ENCODE measurements at regions of chr11 and their contacts with region 1.

Region 1: GRCh38 chr11:64185816-64186498 is at the start of gene STIP1:
- DNase-seq: peak in 7 of 10 donors; percentile 97 to 100 (median 99)

Region 2: DNA sequence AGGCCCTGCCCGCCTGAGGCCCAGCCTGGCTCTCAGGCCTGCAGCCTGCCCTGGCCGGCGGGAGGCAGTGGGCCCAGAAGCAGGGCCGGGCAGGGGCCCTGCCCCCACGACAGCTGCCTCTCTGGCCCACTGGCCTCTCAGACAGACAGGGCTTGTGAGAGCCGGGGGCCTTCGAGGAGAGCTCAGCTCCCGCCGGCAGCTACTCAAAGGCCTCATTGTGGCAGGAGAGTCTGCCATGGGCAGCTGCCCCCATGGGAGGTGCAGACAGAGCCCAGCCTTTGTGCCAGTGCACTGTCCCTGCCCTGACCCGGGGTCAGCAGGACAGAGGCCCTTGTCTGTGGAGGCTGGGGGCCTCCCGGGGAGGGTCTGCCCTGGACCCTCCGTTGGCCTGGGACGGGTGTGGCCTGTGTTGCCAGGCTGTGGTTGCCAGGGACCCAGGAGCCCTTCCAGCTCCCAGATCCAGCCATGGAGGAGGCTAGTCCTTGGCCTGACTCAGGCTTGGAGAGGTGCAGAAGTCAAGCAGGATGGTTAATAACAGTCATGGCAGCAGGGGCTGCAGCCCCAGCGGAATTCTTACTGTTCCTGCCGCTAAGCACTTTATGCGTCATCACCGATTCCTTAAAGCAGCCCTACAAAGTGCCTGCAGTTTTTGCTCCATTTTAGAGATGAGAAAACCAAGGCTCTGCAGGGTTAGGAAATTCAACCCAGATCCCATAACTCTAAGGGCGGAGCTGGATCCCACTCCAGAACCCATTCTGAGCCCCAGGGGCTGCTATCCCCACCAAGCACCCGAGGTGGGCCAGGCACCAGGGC is 137.7 kb before region 1 on chr11:
- intact Hi-C with region 1: no loop called
- DNase-seq: peak; percentile 86 to 100 (median 94)

Region 3: DNA sequence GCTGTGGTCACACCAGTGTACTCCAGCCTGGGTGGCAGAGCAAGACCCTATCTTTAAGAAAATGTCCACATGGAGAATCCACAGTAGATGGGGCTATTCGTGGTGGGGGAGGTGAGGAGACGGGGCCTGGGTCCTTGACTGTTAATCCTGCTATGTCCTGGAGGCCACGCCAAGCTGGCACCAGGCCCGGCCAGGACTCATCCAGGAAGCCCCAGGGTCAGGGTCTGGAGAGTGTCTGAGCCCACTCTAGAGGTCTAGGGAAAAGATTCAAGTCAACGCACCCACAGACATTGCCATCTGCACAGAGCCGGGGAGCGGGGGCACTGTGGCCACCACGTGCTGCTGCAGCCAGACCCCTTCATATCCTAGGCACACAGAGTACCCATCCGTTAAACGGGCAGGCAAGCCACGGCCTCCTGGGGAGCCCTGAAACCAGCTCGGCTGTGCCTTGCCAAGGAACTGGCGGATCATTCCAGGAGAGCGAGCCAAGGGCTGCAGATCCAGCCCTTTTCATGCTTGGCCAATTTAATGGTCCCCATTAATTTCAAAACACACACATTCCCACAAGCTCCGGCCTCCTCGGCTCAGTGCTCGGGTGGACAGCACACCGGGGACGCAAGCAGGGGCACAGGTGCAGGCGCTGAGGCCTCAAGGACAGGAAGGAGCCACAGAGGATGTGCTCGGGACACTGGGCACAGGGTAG is 44.7 kb before region 1 on chr11:
- intact Hi-C with region 1: no loop called
- DNase-seq: peak in 4 of 10 donors; percentile 39 to 90 (median 50)

Region 4: GRCh38 chr11:64230171-64230984 is 44.4 kb after region 1 on chr11 and contains the start of gene DNAJC4:
- intact Hi-C with region 1: loop called (anchors 10 kb)
- DNase-seq: peak; percentile 83 to 99 (median 92)

Region 5: GRCh38 chr11:64276653-64277431 is 90.9 kb after region 1 on chr11:
- intact Hi-C with region 1: no loop called
- DNase-seq: peak in 1 of 10 donors; percentile 91